Dorsolateral prefrontal cortex (tissue), 120 donors: ENCODE measurements at regions of chr11 and their contacts with region 1.

Region 1: DNA sequence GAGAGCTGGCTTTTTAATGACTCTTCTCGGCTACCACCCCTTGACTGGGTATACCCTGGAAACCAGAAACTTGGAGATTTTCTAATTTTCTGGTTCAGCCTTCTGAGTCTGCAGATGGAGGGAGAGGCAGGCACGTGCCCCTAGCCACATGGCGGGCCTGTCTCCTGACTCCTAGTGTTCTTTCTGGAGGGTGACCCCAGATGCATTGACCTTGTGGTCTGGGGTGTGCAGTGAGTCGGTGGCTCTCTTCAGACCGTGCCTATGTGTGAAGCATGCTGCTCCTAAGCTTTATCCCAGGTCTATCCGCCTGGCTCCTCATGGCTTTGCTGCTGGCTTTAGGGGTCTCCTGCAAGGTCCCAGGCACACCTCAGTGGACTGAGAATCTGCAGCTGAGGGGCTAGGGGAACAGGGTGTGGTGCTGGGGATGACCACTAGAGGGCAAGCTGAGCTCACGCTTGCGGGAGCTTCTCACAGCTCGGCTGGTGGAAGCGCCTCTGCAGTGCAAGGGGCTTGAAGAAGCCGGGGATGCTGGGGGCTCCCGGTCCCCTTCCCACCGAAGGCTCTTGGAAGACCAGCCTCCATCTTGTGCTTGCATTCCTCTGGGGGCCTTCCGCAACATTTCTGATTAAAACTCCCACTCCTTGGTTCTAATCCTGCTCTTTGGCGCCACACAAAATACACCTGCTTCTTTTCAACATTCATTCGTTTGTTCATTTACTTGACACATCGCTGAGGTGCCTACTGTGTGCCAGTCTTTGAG is 51.8 kb downstream of the OTOG start:
- DNase-seq: peak; percentile 70 to 89 (median 80)
- H3K4me3 ChIP-seq: no peak overlapping the region
- H3K27ac ChIP-seq: no peak overlapping the region
- H3K27me3 ChIP-seq: peaks cover 0 to 2% (median 0%) of the 10 kb centered on the region in 45 donors
- CTCF ChIP-seq: peak; percentile 54 to 97 (median 92)

Region 2: DNA sequence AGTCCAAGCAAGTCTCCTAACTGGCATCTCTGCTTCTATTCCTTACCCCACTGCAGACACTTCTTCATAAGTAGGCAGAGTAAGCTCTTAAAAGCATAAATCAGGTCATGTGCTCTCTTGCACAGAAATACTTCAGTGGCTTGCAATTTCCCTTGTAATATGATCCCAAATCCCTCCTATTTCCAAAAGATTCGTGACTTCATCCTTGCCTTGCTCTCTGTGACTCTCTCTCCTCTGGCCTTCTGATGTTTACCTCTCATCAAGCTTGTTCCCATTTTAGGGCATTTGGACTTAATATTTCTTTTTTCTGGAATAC is 284.7 kb before region 1 on chr11:
- intact Hi-C with region 1: no loop called
- DNase-seq: no peak
- H3K4me3 ChIP-seq: no peak overlapping the region
- H3K27ac ChIP-seq: peak overlapping the region in 5 of 59 donors; percentile 10 to 35 (median 14)
- H3K27me3 ChIP-seq: no peaks in the 10 kb centered on the region
- CTCF ChIP-seq: no peak

Region 3: DNA sequence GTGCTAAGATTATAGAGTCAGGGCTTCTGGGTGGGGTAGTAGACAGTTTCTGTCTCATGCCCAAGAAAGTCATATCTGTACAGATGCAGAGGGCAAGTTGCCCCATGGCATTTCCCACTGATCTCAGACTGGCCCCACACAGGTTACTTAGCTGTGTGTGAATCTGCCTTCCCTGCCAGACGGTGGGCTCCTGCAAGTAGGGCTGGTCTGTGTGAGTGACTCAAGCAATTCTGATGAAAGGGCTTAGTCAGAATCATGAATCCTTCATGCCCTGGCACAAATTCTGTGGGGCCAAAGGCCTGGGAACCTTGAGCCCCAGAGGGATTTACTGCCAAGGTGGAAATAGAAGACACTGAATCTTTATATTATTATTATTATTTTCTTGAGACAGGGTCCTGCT is 85.0 kb before region 1 on chr11:
- intact Hi-C with region 1: no loop called
- DNase-seq: no peak
- H3K4me3 ChIP-seq: no peak overlapping the region
- H3K27ac ChIP-seq: peak overlapping the region in 3 of 59 donors; percentile 14 to 97 (median 49)
- H3K27me3 ChIP-seq: no peaks in the 10 kb centered on the region
- CTCF ChIP-seq: no peak

Region 4: GRCh38 chr11:17703951-17704350 is 105.1 kb after region 1 on chr11:
- intact Hi-C with region 1: loop called in 1 of 2 experiments (anchors 10 kb)
- DNase-seq: no peak
- H3K4me3 ChIP-seq: no peak overlapping the region
- H3K27ac ChIP-seq: no peak overlapping the region
- H3K27me3 ChIP-seq: peaks cover 0 to 9% (median 0%) of the 10 kb centered on the region in 45 donors
- CTCF ChIP-seq: no peak

Region 5: DNA sequence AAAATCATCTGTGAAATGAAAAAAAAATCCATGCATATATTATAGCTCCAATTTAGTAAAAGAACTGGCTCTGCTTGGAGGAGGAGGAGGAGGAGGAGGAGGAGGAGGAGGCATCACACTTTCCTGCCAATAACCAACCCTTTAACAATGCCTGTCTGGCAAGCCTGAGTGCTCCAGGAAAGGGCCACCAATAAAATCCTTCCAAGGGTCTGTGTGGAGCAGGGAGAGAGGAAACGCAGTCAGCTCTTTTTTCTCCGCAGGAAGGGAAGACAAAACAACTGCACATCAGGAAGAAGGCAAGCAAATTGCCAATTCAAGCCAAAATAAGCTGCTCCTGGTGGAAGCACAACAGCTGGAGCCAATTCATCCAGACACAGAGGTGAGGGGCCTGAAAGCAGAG is 274.7 kb after region 1 on chr11:
- intact Hi-C with region 1: no loop called
- DNase-seq: no peak
- H3K4me3 ChIP-seq: no peak overlapping the region
- H3K27ac ChIP-seq: peak overlapping the region in 35 of 59 donors; percentile 6 to 83 (median 57)
- H3K27me3 ChIP-seq: no peaks in the 10 kb centered on the region
- CTCF ChIP-seq: no peak

Region 6: GRCh38 chr11:17978553-17979287 is 379.8 kb after region 1 on chr11:
- intact Hi-C with region 1: loop called (anchors 2 to 5 kb)
- DNase-seq: peak; percentile 53 to 88 (median 66)
- H3K4me3 ChIP-seq: no peak overlapping the region
- H3K27ac ChIP-seq: peak overlapping the region in 9 of 59 donors; percentile 15 to 61 (median 36)
- H3K27me3 ChIP-seq: no peaks in the 10 kb centered on the region
- CTCF ChIP-seq: peak; percentile 45 to 90 (median 78)